GM10248 (cell line): ENCODE measurements at regions of chr7 and their contacts with region 1.

Region 1: GRCh38 chr7:38335492-38336147 is 62.2 kb upstream of the TARP start:
- DNase-seq: peak; percentile 84
- CTCF ChIP-seq: peak; percentile 100

Region 2: DNA sequence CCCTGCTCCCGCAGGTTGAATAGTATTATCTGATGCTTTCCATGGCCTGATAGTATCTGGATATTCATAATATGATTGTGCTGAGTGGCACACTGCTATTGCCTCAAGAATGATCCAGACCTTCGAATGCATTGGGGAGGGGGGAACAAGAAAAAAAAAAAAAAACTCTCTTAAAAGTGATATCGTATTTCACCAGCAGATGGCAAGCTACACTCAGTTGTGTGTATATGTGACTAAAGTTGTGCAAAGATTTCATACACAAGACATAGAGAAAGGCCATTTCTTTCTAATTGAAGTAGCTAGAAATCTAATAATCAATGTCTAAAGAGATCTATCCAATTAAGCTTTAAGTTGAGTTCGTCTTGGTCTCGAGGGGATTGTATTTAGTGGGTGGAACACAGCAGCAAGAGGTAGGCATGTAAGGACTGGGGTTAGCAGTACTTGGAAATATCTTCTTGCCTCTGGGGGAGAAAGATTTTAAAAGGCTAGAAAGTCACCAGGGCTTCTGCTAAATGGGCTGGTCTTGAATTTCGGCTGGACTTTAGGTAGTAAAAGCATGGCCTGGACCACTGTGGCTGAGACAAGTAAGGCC is 434.3 kb before region 1 on chr7:
- CTCF ChIA-PET with region 1: interaction called, 17 read pairs
- POLR2A ChIA-PET with region 1: no interaction called
- DNase-seq: peak; percentile 30
- CTCF ChIP-seq: peak; percentile 32

Region 3: GRCh38 chr7:38107486-38107893 is 228.1 kb before region 1 on chr7:
- CTCF ChIA-PET with region 1: interaction called, 39 read pairs
- POLR2A ChIA-PET with region 1: no interaction called
- DNase-seq: peak; percentile 55
- CTCF ChIP-seq: peak; percentile 73

Region 4: GRCh38 chr7:38312821-38313220 is 22.8 kb before region 1 on chr7:
- CTCF ChIA-PET with region 1: interaction called, 71 read pairs
- POLR2A ChIA-PET with region 1: no interaction called
- DNase-seq: no peak
- CTCF ChIP-seq: no peak

Region 5: GRCh38 chr7:38318803-38319416 is 16.7 kb before region 1 on chr7:
- CTCF ChIA-PET with region 1: interaction called, 71 read pairs
- POLR2A ChIA-PET with region 1: no interaction called
- DNase-seq: peak; percentile 68
- CTCF ChIP-seq: peak; percentile 61